Naive thymus-derived CD4-positive, alpha-beta T cell (primary cell): ENCODE measurements at regions of chr11 and their contacts with region 1.

Region 1: DNA sequence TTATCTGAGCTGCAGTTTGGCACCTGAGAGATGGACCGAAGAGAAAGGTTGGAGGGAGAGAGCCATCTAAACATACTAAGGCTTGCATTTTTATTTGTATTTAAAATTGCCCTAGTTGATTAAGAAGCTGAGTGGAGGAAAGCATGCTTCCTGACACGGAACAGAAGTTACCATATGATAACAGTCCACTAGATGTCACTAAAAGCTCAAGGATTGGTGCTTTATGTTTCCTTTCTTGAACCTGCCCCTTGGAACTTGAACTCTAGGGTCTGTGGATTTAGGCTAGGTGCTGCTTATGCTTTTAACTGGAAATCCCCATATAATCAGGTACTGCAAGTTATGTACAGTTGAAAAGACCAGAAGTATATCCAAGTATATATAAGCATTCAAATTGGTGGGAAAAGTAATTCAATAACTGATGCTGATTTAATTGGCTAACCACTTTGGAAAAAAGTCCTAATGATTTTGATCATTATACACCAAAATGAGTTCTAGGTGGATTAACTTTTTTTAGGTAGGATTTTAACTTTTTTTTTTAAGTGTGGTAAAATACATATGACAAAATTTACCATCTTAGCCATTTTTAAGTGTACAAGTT is 9.5 kb downstream of the RBMXL2 start:
- DNase-seq: peak in 7 of 9 donors; percentile 10 to 52 (median 39)
- ATAC-seq: peak; percentile 69
- H3K4me3 ChIP-seq: no peak overlapping the region
- H3K4me3 Mint-ChIP-seq: no peak overlapping the region
- H3K27ac ChIP-seq: no peak overlapping the region
- H3K27ac Mint-ChIP-seq: no peak overlapping the region
- H3K4me1 ChIP-seq: no peaks in the 10 kb centered on the region
- H3K4me1 Mint-ChIP-seq: no peaks in the 10 kb centered on the region
- H3K27me3 ChIP-seq: no peaks in the 10 kb centered on the region
- H3K27me3 Mint-ChIP-seq: peaks cover 18 to 40% (median 30%) of the 10 kb centered on the region in 5 donors

Region 2: DNA sequence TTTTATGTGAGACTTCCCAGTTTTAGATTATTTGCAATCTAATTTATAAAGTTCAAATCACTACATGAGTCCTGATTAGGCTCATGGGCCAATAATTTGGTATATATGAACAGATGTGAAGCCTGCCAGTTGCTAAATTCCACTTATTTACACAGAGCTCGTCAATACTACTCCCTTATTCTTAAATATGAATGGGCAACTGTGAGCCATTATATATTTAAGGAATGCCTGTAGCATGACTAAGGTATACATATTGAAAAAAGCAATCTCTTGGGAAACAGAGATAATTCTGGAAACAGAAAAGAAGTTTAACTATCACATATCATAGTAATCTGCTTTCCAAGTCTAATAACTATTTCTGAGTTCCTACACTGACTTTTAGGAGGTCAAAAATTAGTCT is 17.4 kb after region 1 on chr11:
- CTCF ChIA-PET with region 1: no interaction called
- POLR2A ChIA-PET with region 1: no interaction called
- intact Hi-C with region 1: no loop called
- DNase-seq: no peak
- ATAC-seq: no peak
- H3K4me3 ChIP-seq: no peak overlapping the region
- H3K4me3 Mint-ChIP-seq: no peak overlapping the region
- H3K27ac ChIP-seq: no peak overlapping the region
- H3K27ac Mint-ChIP-seq: no peak overlapping the region
- H3K4me1 ChIP-seq: no peaks in the 10 kb centered on the region
- H3K4me1 Mint-ChIP-seq: no peaks in the 10 kb centered on the region
- H3K27me3 ChIP-seq: no peaks in the 10 kb centered on the region
- H3K27me3 Mint-ChIP-seq: peaks cover 7 to 35% (median 27%) of the 10 kb centered on the region in 5 donors

Region 3: DNA sequence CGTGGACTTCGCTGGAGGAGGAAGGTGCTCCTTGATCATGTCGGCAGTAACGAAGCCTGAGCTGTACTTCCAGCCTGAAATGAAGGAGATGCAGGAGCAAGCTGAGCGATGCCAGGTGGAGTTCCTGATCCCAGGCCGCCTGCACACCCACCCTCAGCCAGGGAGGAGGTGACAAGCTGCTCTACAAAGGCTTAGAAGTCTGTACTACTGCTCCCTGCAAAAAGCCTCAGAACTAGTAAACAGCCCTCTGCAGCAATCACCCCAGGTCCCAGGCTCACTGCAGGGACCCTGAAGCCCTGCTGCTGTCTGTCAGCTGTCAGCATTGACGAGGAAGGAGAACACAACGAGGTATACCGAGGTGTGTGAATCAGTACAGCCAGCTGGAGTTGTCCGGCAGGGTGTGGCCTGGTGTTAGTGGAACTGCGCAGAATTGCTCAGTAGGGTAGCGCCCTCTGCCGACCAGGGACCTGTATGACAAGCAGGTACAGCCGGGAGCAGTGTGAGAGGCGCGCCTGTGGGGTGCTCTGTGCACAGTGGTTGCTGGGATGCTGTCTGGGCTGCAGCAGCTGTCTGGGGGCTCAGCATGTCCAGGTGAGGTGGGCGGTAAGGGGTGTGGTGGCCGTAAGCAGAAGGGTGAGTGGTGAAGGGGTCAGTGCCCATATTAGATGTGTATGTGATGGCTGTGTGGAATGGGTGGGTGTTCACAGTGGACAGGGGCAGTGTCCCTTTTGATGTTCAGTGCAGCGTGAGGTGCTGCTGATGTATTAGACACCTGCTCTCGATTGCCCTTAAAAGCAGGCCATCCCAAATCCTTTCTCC is 567.3 kb after region 1 on chr11:
- CTCF ChIA-PET with region 1: no interaction called
- POLR2A ChIA-PET with region 1: no interaction called
- intact Hi-C with region 1: loop called in 1 of 2 experiments (anchors 1 kb)
- DNase-seq: peak; percentile 24 to 73 (median 62)
- ATAC-seq: peak; percentile 98
- H3K4me3 ChIP-seq: no peak overlapping the region
- H3K4me3 Mint-ChIP-seq: no peak overlapping the region
- H3K27ac ChIP-seq: no peak overlapping the region
- H3K27ac Mint-ChIP-seq: peak overlapping the region in 1 of 9 donors; percentile 17
- H3K4me1 ChIP-seq: no peaks in the 10 kb centered on the region
- H3K4me1 Mint-ChIP-seq: peaks cover 0 to 6% (median 2%) of the 10 kb centered on the region in 7 donors
- H3K27me3 ChIP-seq: no peaks in the 10 kb centered on the region
- H3K27me3 Mint-ChIP-seq: peaks cover 0 to 3% (median 0%) of the 10 kb centered on the region in 5 donors

Region 4: DNA sequence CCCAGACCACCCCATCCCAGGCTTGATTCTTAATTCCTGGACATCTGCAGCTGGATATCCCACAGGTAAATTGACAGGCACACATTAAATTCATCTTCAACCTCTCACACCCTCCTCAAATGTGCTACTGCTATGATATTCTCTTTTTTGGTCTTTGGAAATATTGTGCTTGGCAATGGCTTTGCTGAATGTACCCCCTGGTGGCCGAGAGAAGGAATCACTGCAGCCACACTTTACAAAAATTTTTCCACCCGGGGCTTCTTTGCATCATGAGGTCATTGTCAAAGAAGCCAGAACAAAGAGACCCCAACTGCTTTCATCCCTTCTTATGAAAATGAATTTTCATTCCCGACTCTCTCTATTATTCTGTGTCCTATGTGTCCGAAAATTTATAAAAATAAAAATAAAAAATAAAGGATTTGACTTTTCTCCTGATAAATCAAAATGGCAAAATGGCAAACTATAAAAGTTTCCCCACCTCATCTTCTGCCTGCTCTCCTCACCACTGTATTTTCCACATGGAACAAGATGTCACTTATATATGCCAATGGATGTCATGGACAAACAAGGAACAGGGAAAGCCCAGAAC is 590.0 kb after region 1 on chr11:
- CTCF ChIA-PET with region 1: interaction called, 7 read pairs
- POLR2A ChIA-PET with region 1: no interaction called
- intact Hi-C with region 1: loop called in 1 of 2 experiments (anchors 1 kb)
- DNase-seq: peak in 5 of 9 donors; percentile 8 to 31 (median 22)
- ATAC-seq: peak; percentile 55
- H3K4me3 ChIP-seq: no peak overlapping the region
- H3K4me3 Mint-ChIP-seq: no peak overlapping the region
- H3K27ac ChIP-seq: no peak overlapping the region
- H3K27ac Mint-ChIP-seq: no peak overlapping the region
- H3K4me1 ChIP-seq: no peaks in the 10 kb centered on the region
- H3K4me1 Mint-ChIP-seq: peaks cover 0 to 2% (median 0%) of the 10 kb centered on the region in 7 donors
- H3K27me3 ChIP-seq: no peaks in the 10 kb centered on the region
- H3K27me3 Mint-ChIP-seq: peaks cover 25 to 42% (median 32%) of the 10 kb centered on the region in 5 donors

Region 5: GRCh38 chr11:7694235-7694634 is 595.9 kb after region 1 on chr11:
- CTCF ChIA-PET with region 1: interaction called, 7 read pairs
- POLR2A ChIA-PET with region 1: no interaction called
- intact Hi-C with region 1: loop called (anchors 1 kb)
- DNase-seq: no peak
- ATAC-seq: no peak
- H3K4me3 ChIP-seq: no peak overlapping the region
- H3K4me3 Mint-ChIP-seq: no peak overlapping the region
- H3K27ac ChIP-seq: no peak overlapping the region
- H3K27ac Mint-ChIP-seq: no peak overlapping the region
- H3K4me1 ChIP-seq: no peaks in the 10 kb centered on the region
- H3K4me1 Mint-ChIP-seq: no peaks in the 10 kb centered on the region
- H3K27me3 ChIP-seq: peaks cover 6 to 11% of the 10 kb centered on the region in 2 donors
- H3K27me3 Mint-ChIP-seq: peaks cover 28 to 55% (median 32%) of the 10 kb centered on the region in 5 donors

Region 6: GRCh38 chr11:8099291-8099899 is 1001.1 kb after region 1 on chr11:
- CTCF ChIA-PET with region 1: no interaction called
- POLR2A ChIA-PET with region 1: no interaction called
- intact Hi-C with region 1: loop called in 1 of 2 experiments (anchors 2 kb)
- DNase-seq: peak; percentile 39 to 66 (median 55)
- ATAC-seq: peak; percentile 60
- H3K4me3 ChIP-seq: no peak overlapping the region
- H3K4me3 Mint-ChIP-seq: no peak overlapping the region
- H3K27ac ChIP-seq: no peak overlapping the region
- H3K27ac Mint-ChIP-seq: peak overlapping the region in 1 of 9 donors; percentile 14
- H3K4me1 ChIP-seq: no peaks in the 10 kb centered on the region
- H3K4me1 Mint-ChIP-seq: peaks cover 0 to 2% (median 0%) of the 10 kb centered on the region in 7 donors
- H3K27me3 ChIP-seq: no peaks in the 10 kb centered on the region
- H3K27me3 Mint-ChIP-seq: no peaks in the 10 kb centered on the region